CD8-positive, alpha-beta memory T cell (primary cell): ENCODE measurements at regions of chr3 and their contacts with region 1.

Region 1: DNA sequence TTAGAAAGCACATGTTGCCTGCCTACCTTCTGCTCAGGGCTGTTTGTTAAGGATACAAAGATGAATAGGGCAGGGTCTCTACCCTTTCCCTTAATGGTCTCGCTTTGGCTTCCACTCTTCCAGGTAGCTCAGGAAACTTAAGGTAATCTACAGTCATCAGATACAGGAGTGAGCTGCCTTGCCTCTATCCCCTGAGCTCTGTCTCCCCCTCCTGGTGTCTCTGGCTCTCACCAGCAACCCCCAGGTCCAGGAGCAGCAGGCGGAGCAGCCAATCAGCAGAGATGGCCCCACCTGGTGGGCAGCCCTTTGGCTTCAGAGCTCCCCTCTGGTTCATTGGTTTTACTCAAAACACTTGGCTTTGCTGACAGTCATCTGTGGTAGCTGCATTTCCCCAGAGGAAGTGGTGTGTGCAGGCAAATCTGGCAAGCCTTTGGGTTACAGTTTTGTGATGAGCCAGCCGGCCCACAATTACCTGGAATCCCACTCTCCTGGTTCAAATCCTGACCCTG is 8.5 kb upstream of the CX3CR1 start:
- DNase-seq: peak; percentile 71 to 86 (median 73)
- H3K4me3 ChIP-seq: no peak overlapping the region
- H3K4me3 Mint-ChIP-seq: no peak overlapping the region
- H3K27ac ChIP-seq: no peak overlapping the region
- H3K27ac Mint-ChIP-seq: peak overlapping the region in 7 of 8 donors; percentile 9 to 87 (median 72)
- H3K4me1 ChIP-seq: peaks cover 13% of the 10 kb centered on the region
- H3K4me1 Mint-ChIP-seq: peaks cover 17 to 45% (median 32%) of the 10 kb centered on the region in 3 donors
- H3K27me3 ChIP-seq: no peaks in the 10 kb centered on the region
- H3K27me3 Mint-ChIP-seq: peaks cover 0 to 2% of the 10 kb centered on the region in 2 donors

Region 2: DNA sequence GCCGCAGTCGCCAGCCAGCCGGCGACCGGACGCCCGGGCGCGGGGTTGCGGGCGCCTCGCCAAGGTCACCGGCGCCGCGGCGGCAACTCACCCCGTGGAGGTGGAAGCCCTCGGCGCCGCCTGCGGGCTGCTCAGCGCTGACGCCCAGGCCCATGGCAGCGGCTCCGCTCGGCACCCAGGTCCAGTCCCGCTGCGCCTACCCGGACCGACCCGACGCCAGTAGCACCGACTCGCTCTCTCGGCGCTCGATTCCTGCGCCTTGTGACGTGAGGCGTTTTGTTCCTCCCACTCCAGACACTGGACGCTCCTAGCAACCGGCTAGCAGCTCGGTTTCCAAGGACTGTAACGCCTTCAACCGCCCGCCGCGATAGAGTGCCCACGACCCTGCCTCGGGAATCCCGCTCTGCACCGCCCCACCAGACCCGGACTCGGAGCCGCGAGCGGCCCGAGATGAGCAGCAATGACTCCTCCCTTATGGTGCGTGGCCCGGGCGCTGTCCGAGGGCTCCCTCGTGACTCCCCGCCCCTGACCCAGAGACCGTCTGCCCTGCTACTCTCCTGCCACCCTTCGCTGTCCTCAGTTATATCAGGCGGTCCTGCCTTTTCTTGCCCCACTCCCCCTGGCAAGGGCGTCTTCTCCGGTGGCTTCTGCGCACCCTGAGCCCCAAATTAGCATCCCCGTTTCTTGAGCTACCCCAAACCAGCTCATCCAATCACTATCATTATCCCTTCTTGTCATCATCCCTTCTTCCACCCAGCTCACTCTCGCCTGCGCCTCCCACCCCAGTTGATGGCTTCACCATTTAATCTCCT is 180.8 kb before region 1 on chr3 and contains the starts of genes GORASP1 and TTC21A:
- CTCF ChIA-PET with region 1: interaction called, 24 read pairs
- POLR2A ChIA-PET with region 1: no interaction called
- DNase-seq: peak; percentile 39 to 71 (median 63)
- H3K4me3 ChIP-seq: peak within 1 kb of the TSS; percentile 71
- H3K4me3 Mint-ChIP-seq: peak within 1 kb of the TSS; percentile 86 to 98 (median 93)
- H3K27ac ChIP-seq: peak within 1 kb of the TSS; percentile 66
- H3K27ac Mint-ChIP-seq: peak within 1 kb of the TSS; percentile 71 to 99 (median 92)
- H3K4me1 ChIP-seq: peaks cover 29% of the 10 kb centered on the region
- H3K4me1 Mint-ChIP-seq: peaks cover 50 to 55% (median 55%) of the 10 kb centered on the region in 3 donors
- H3K27me3 ChIP-seq: no peaks in the 10 kb centered on the region
- H3K27me3 Mint-ChIP-seq: peaks cover 0 to 2% of the 10 kb centered on the region in 2 donors
- total RNA-seq, gene GORASP1: 21.6 to 22.8 TPM
- total RNA-seq, gene TTC21A: 0.80 to 1.1 TPM

Region 3: GRCh38 chr3:39177708-39178332 is 110.5 kb before region 1 on chr3:
- CTCF ChIA-PET with region 1: interaction called, 11 read pairs
- POLR2A ChIA-PET with region 1: no interaction called
- DNase-seq: peak; percentile 49 to 73 (median 57)
- H3K4me3 ChIP-seq: peak overlapping the region; percentile 50
- H3K4me3 Mint-ChIP-seq: peak overlapping the region; percentile 54 to 88 (median 79)
- H3K27ac ChIP-seq: peak overlapping the region; percentile 67
- H3K27ac Mint-ChIP-seq: peak overlapping the region; percentile 81 to 98 (median 94)
- H3K4me1 ChIP-seq: peaks cover 32% of the 10 kb centered on the region
- H3K4me1 Mint-ChIP-seq: peaks cover 36 to 37% (median 36%) of the 10 kb centered on the region in 3 donors
- H3K27me3 ChIP-seq: no peaks in the 10 kb centered on the region
- H3K27me3 Mint-ChIP-seq: no peaks in the 10 kb centered on the region

Region 4: DNA sequence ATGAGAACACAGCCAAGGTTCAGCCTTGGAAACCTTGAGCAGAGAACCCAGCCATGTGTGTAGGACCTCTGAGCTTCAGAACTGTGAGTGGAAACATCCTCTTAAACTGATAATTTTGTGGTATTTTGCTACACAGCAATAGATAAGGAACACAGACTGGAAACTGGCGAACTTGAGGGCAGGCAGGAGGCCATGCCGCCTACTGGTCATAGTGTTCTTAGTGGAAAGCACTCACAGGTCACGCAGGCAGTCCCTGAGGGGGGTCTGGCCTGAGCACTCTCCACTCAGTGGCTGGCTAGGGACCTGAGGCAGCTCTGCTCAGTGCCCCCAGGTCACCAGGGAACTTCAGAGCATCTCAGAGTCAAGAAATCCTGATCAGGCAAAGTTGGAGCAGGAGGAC is 86.3 kb before region 1 on chr3:
- CTCF ChIA-PET with region 1: interaction called, 253 read pairs
- POLR2A ChIA-PET with region 1: no interaction called
- DNase-seq: no peak
- H3K4me3 ChIP-seq: no peak overlapping the region
- H3K4me3 Mint-ChIP-seq: no peak overlapping the region
- H3K27ac ChIP-seq: no peak overlapping the region
- H3K27ac Mint-ChIP-seq: peak overlapping the region in 1 of 8 donors; percentile 27
- H3K4me1 ChIP-seq: no peaks in the 10 kb centered on the region
- H3K4me1 Mint-ChIP-seq: no peaks in the 10 kb centered on the region
- H3K27me3 ChIP-seq: no peaks in the 10 kb centered on the region
- H3K27me3 Mint-ChIP-seq: peaks cover 19 to 33% of the 10 kb centered on the region in 2 donors

Region 5: DNA sequence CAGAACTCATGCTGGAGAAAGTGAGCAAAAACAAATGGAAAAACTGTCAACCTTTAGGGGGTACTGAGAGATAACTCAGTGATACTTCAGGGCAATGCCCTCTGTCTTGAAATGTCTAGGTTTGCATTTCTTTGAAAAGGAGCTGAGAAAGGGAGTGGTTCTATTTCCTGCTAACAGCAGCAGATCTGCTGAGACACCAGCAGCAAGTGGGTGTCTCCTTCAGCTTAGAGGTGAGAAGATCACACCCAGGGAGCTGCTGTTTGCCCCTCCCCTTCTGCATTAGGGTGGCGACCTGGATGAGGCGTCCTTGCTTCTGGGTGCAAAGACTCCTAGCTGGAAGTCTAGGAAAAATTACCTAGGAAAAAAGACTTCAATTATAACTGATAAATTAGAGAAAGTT is 53.6 kb before region 1 on chr3:
- CTCF ChIA-PET with region 1: interaction called, 10 read pairs
- POLR2A ChIA-PET with region 1: no interaction called
- DNase-seq: peak in 4 of 5 donors; percentile 23 to 61 (median 40)
- H3K4me3 ChIP-seq: peak overlapping the region; percentile 9
- H3K4me3 Mint-ChIP-seq: peak overlapping the region; percentile 61 to 91 (median 69)
- H3K27ac ChIP-seq: no peak overlapping the region
- H3K27ac Mint-ChIP-seq: peak overlapping the region; percentile 81 to 96 (median 89)
- H3K4me1 ChIP-seq: peaks cover 27% of the 10 kb centered on the region
- H3K4me1 Mint-ChIP-seq: peaks cover 48 to 78% (median 61%) of the 10 kb centered on the region in 3 donors
- H3K27me3 ChIP-seq: no peaks in the 10 kb centered on the region
- H3K27me3 Mint-ChIP-seq: peaks cover 6 to 13% of the 10 kb centered on the region in 2 donors

Region 6: GRCh38 chr3:39447637-39448483 is 159.5 kb after region 1 on chr3:
- CTCF ChIA-PET with region 1: no interaction called
- POLR2A ChIA-PET with region 1: no interaction called
- DNase-seq: peak; percentile 38 to 63 (median 43)
- H3K4me3 ChIP-seq: no peak overlapping the region
- H3K4me3 Mint-ChIP-seq: no peak overlapping the region
- H3K27ac ChIP-seq: no peak overlapping the region
- H3K27ac Mint-ChIP-seq: no peak overlapping the region
- H3K4me1 ChIP-seq: no peaks in the 10 kb centered on the region
- H3K4me1 Mint-ChIP-seq: no peaks in the 10 kb centered on the region
- H3K27me3 ChIP-seq: no peaks in the 10 kb centered on the region
- H3K27me3 Mint-ChIP-seq: peaks cover 0 to 14% of the 10 kb centered on the region in 2 donors